ENCODE measurements at regions of chr12 and their contacts with region 1.

Region 1: DNA sequence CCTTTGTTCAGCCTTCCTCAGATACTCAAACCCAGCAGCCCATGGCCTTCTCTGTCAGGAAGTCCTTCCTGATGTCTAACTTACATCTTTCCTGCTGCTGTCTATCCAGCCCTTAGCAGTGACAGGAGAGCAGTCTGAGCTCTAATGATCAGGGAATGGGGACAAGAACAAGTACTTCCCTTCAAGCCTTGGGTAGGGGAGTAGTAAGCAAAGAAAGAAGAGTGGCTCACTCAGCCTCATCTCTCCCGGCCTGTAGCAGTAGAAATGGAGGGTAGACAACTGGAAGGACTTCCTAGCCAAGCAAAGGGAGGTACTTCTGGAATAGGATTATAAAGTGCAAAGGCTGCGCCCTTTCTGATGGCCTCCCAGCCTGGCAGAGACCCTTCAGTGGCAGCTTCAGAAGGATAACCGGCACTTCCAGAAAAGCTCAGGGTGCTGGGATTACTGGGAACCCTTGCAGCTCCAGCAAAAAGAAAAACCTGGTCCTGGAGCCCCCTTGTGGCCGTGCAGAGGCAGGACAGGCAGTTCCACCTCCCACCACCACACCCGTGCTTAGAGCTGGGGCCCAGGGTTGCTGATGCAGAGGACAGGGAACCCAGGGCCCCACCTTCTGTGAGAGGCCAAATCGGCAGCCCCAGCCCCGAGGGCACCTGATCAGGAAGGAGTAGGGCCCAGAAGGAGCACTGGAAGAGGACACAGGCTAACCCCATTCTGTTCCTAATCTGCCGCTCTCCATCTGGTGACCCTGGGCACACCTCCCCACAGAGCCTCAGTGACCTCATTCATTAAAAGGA is 12.4 kb upstream of the SMUG1 start:
- DNase-seq: peak; percentile 74
- ATAC-seq: peak; percentile 94
- H3K4me3 Mint-ChIP-seq: no peak overlapping the region
- H3K27ac Mint-ChIP-seq: no peak overlapping the region
- H3K4me1 Mint-ChIP-seq: peaks cover 3% of the 10 kb centered on the region
- H3K27me3 Mint-ChIP-seq: peaks cover 44% of the 10 kb centered on the region

Region 2: GRCh38 chr12:53995378-53996239 is 205.6 kb before region 1 on chr12:
- CTCF ChIA-PET with region 1: interaction called, 11 read pairs
- POLR2A ChIA-PET with region 1: no interaction called
- DNase-seq: no peak
- ATAC-seq: peak; percentile 28
- H3K4me3 Mint-ChIP-seq: peak overlapping the region; percentile 72
- H3K27ac Mint-ChIP-seq: no peak overlapping the region
- H3K4me1 Mint-ChIP-seq: peaks cover 27% of the 10 kb centered on the region
- H3K27me3 Mint-ChIP-seq: peaks cover 93% of the 10 kb centered on the region